SK-N-SH (cell line): ENCODE measurements at regions of chrX and their contacts with region 1.

Region 1: GRCh38 chrX:149470955-149471354 is 34.2 kb downstream of the IDS start:
- DNase-seq: peak; percentile 78
- H3K4me3 ChIP-seq: peak overlapping the region in 1 of 2 experiments; percentile 33; a peak in 1 of 4 replicates
- H3K27ac ChIP-seq: no peak overlapping the region
- H3K4me1 ChIP-seq: no peaks in the 10 kb centered on the region; a peak in 1 of 4 replicates
- H3K27me3 ChIP-seq: peaks cover 13% of the 10 kb centered on the region; the same call in 1 of the 2 replicates
- CTCF ChIP-seq: peak; percentile 91
- EP300 ChIP-seq: no peak
- RAD21 ChIP-seq: peak; percentile 86

Region 2: DNA sequence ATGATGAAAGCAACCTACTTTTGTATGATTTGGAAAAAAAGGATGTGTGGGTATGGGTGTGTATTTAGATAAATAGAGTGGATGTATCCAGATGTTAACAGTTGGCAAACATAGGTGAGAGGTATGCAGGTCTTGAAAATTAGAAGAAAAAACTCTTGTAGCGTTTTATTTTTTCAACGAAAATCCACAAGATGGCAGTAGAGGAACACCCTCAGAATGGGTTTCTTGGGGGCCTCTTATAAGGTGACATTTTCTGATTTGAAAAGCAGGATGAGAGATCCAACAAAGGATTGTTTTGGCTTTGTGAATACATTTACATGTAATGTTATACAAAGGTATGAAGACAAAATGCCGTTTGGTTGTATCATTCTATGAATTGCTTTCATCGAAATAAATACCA is 1421.5 kb before region 1 on chrX:
- CTCF ChIA-PET with region 1: interaction called, 14 read pairs
- POLR2A ChIA-PET with region 1: no interaction called
- DNase-seq: peak; percentile 37
- H3K4me3 ChIP-seq: no peak overlapping the region
- H3K27ac ChIP-seq: no peak overlapping the region
- H3K4me1 ChIP-seq: no peaks in the 10 kb centered on the region
- H3K27me3 ChIP-seq: no peaks in the 10 kb centered on the region
- CTCF ChIP-seq: peak; percentile 69
- EP300 ChIP-seq: no peak
- RAD21 ChIP-seq: peak; percentile 69

Region 3: GRCh38 chrX:149198980-149199732 is 271.8 kb before region 1 on chrX:
- CTCF ChIA-PET with region 1: no interaction called
- POLR2A ChIA-PET with region 1: no interaction called
- DNase-seq: no peak
- H3K4me3 ChIP-seq: no peak overlapping the region
- H3K27ac ChIP-seq: no peak overlapping the region
- H3K4me1 ChIP-seq: no peaks in the 10 kb centered on the region
- H3K27me3 ChIP-seq: no peaks in the 10 kb centered on the region
- CTCF ChIP-seq: no peak
- EP300 ChIP-seq: no peak
- RAD21 ChIP-seq: no peak

Region 4: GRCh38 chrX:149487292-149487691 is 16.3 kb after region 1 on chrX:
- CTCF ChIA-PET with region 1: interaction called, 17 read pairs
- POLR2A ChIA-PET with region 1: no interaction called
- DNase-seq: no peak
- H3K4me3 ChIP-seq: no peak overlapping the region
- H3K27ac ChIP-seq: no peak overlapping the region
- H3K4me1 ChIP-seq: no peaks in the 10 kb centered on the region; a peak in 1 of 4 replicates
- H3K27me3 ChIP-seq: no peaks in the 10 kb centered on the region
- CTCF ChIP-seq: peak; percentile 44
- EP300 ChIP-seq: no peak
- RAD21 ChIP-seq: no peak